AG04449 (cell line): ENCODE measurements at regions of chr6 and their contacts with region 1.

Region 1: DNA sequence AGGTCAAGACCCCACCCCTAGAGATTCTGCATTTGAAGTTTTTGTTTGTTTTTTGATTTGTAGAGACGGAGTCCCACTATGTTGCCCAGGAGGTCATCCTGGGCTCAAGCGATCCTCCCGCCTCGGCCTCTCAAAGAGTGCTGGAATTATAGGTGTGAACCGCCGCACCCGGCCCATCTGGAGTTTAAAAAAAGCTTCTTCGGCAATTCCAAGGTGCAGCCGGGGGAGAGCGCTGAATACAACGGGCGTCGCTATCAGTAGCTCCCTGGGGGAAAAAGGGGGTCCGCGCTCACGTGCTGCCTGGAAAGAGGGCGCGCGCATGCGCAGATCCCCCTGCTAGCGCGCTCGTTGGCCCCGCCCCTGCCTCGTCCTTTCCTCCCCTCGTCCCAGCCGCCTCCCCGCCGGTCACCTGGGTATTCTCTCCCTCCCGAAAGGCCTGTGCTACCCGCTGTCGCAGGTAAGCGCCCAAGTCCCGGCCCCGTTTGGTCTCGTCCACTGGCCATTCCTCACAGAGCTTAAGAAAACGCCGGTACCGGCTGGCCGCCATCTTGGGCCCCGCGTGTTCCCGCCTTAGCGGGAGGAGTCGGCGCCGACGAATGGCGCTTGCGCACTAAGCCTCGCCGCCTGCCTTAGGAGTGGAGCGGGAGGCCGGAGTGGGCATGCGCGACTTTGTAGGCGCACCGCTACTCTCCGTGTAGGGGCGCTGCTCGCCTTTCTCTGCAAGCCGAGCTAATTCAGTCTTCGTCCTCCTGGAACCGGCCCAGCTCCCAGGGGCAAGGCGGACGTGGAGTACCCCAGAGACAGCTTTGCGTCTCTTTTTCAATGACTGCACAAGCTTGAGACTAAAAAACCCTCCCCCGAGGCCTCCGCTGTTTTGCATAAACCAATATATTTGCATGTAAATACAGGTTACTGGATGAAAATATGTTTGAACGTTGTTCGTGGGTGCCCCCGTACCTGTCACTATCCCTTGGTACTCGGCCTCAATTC is at the start of gene UQCC2:
- DNase-seq: peak; percentile 60
- H3K4me3 ChIP-seq: peak within 1 kb of the TSS; percentile 98
- CTCF ChIP-seq: peak; percentile 86

Region 2: GRCh38 chr6:33557376-33557775 is 154.1 kb before region 1 on chr6:
- CTCF ChIA-PET with region 1: no interaction called
- POLR2A ChIA-PET with region 1: no interaction called
- DNase-seq: no peak
- H3K4me3 ChIP-seq: no peak overlapping the region
- CTCF ChIP-seq: no peak

Region 3: DNA sequence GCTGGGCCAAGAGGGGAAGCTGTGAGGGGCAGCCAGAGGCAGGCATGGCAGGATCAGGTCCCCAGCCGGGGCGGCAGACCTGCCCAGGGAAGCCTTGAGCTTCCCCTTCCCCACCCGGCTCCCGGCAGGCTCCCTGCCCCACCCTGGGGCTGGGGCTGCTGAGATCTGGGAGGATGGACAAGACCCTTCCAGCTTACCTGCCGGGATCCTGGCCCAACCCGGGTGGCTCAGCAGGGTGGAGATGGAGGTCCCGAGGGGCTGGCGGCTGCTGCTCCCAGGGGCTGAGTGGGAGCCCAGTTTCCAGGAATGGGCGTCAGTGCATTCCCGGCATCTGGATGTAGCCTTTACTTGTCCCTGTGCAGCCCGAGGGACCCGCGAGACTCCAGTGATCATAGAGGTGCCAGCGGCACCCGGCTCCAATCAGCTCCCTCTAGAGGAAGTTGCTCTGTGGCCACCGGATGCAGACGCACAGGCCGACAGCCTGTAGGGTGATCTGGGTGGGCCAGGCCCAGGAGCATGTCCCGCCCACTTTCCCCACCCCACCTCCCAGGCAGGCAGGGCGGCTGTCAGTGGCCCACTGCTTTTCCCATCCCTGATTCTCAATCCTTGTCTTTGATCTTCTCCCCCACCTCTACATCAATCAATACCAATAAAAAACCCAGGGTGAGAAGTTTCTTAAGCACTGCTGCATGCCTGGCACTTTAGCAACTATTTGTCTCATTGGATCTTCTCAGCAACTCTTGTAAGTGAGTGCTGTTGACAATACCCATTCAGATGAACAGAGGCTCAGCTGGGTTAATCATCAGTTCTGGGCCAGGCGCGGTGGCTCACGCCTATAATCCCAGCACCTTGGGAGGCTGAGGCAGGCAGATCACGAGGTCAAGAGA is 131.4 kb before region 1 on chr6 and contains the start of gene BAK1:
- CTCF ChIA-PET with region 1: interaction called, 539 read pairs
- POLR2A ChIA-PET with region 1: interaction called, 3 read pairs
- DNase-seq: peak; percentile 46
- H3K4me3 ChIP-seq: peak within 1 kb of the TSS; percentile 84
- CTCF ChIP-seq: peak; percentile 67

Region 4: GRCh38 chr6:33620856-33621710 is 90.4 kb before region 1 on chr6 and contains the start of gene ITPR3:
- CTCF ChIA-PET with region 1: no interaction called
- POLR2A ChIA-PET with region 1: no interaction called
- DNase-seq: no peak
- H3K4me3 ChIP-seq: peak within 1 kb of the TSS; percentile 63
- CTCF ChIP-seq: no peak

Region 5: GRCh38 chr6:33700391-33701050 is 10.9 kb before region 1 on chr6:
- CTCF ChIA-PET with region 1: interaction called, 83 read pairs
- POLR2A ChIA-PET with region 1: no interaction called
- DNase-seq: peak; percentile 14
- H3K4me3 ChIP-seq: no peak overlapping the region
- CTCF ChIP-seq: peak; percentile 85

Region 6: DNA sequence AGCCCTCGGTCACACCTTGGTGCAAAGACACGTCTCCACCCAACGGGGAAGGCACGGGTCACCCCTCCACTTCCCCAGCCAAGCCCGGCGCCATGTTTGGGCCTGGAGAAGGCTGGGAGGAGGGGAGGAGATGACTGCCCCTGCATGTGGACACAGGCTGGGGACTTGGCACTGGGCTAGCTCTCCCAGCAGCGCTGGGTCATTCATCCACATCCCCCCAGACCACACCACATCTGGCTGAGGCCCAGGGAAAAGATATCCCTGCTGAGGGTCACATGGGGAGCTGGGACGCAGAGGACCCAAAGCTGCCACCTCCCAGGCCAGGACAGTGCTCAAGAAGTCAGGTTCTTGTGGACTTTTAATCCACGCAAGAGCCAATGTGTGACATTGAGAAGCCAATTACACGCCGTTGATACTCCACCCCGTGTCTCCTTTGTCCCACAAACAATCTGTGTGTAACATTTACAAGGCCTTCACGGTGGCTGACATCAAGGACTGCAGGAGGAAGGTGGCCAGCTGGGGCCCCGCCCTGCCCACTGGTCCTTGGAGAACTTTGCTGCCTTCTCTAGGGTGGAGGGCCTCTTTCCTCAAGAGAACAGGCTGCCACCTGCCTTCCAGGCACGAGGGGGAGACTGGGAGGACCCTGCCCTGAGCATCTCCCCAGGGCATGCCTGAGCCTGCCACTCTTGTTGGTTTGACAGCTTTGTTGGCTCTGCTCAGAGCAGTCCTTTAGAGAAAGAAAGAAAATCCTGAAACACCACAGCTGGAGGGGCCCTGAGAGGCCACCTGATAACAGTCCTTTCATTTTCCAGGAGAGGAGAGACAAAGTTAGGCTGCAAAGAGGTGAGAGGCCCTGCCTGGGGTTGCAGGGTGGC is 40.6 kb after region 1 on chr6:
- CTCF ChIA-PET with region 1: interaction called, 12 read pairs
- POLR2A ChIA-PET with region 1: no interaction called
- DNase-seq: no peak
- H3K4me3 ChIP-seq: no peak overlapping the region
- CTCF ChIP-seq: no peak

Region 7: DNA sequence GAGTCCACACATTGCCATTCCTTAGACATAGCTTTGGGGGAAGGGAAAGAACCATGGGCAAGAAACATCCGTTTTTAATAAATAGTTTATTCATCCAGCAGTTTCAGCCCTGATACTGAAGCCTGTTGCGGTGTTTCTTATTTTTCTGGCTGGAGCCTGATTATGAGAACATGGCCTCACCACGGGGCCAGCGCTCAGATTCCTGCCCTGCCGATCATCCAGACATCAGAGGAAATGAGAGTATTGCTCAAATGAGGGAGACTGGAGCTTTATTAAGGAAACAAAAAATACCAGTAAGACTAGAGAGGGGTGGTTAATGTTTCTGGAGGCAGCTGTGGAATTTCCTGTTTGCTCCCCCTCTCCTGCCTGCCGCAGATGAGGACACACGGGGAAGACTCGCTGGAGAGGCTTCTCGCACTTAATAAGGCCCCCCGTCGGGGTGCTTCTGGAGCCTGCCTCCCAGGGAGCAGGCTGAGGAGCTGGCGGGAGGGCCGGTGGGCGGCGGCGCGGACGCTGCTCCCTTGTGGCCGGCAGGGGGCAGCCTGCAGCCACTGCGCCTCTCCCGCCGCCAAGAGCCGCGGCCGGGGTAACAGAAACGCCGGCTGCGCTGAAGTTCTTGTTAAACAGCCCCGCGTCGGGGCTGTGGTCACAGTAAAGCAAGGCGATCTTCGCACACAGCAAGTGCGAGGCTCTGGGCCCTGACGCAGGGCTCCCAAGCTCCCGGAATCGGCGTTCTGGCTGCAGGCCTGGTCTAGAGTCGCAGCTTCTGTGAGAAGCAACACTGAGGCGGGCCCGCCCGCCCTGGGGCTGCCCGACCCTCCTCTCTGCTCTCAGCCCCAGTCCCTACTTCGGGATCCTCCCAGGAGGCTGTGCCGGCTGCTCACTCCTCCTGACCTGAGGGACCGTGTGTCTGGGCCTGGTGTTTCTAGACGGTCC is 60.0 kb after region 1 on chr6:
- CTCF ChIA-PET with region 1: interaction called, 44 read pairs
- POLR2A ChIA-PET with region 1: interaction called, 9 read pairs
- DNase-seq: peak; percentile 98
- H3K4me3 ChIP-seq: peak overlapping the region; percentile 23; the same call in 1 of the 2 replicates
- CTCF ChIP-seq: peak; percentile 92

Region 8: GRCh38 chr6:34055223-34055933 is 343.9 kb after region 1 on chr6:
- CTCF ChIA-PET with region 1: interaction called, 11 read pairs
- POLR2A ChIA-PET with region 1: no interaction called
- DNase-seq: no peak
- H3K4me3 ChIP-seq: no peak overlapping the region
- CTCF ChIP-seq: peak; percentile 86